ENCODE measurements at regions of chr10 and their contacts with region 1.

Region 1: GRCh38 chr10:3043512-3044368 is 23.6 kb upstream of the PFKP start:
- DNase-seq: peak; percentile 74
- H3K4me3 Mint-ChIP-seq: no peak overlapping the region
- H3K27ac Mint-ChIP-seq: no peak overlapping the region
- H3K4me1 Mint-ChIP-seq: peaks cover 2% of the 10 kb centered on the region
- H3K27me3 Mint-ChIP-seq: peaks cover 2% of the 10 kb centered on the region

Region 2: DNA sequence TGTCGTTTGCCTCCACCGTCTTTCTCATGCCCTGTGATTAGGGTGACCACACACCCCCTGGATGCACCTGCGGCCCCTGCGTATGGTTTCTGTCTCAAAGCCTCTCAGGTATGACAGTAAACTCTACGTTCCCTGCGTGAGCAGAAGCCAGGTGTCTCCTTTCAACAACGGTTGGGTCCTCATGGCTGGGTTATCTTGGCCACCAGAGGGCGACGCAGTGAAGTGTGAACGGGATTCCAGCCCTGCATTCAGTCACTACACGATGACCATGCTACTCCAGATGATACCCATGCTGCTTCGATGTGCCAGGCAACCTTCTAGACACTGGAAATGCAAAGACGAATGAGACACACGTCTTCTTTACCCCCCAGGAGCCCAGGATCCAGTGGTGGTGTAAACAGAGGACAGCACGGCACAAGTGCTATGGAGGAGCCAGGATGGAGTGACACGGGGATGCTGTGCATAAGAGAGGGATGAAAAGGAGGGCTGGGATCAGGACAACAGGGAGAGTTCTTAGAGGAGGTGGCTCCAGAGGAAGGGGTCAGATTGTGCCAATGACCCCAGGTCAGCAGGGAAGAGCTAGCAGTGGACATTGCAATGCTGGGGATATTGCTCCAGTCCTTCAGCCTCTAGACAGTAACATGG is 204.5 kb before region 1 on chr10:
- CTCF ChIA-PET with region 1: interaction called, 4 read pairs
- intact Hi-C with region 1: loop called (anchors 1 kb)
- DNase-seq: peak; percentile 53
- H3K4me3 Mint-ChIP-seq: no peak overlapping the region
- H3K27ac Mint-ChIP-seq: no peak overlapping the region
- H3K4me1 Mint-ChIP-seq: no peaks in the 10 kb centered on the region
- H3K27me3 Mint-ChIP-seq: peaks cover 23% of the 10 kb centered on the region

Region 3: DNA sequence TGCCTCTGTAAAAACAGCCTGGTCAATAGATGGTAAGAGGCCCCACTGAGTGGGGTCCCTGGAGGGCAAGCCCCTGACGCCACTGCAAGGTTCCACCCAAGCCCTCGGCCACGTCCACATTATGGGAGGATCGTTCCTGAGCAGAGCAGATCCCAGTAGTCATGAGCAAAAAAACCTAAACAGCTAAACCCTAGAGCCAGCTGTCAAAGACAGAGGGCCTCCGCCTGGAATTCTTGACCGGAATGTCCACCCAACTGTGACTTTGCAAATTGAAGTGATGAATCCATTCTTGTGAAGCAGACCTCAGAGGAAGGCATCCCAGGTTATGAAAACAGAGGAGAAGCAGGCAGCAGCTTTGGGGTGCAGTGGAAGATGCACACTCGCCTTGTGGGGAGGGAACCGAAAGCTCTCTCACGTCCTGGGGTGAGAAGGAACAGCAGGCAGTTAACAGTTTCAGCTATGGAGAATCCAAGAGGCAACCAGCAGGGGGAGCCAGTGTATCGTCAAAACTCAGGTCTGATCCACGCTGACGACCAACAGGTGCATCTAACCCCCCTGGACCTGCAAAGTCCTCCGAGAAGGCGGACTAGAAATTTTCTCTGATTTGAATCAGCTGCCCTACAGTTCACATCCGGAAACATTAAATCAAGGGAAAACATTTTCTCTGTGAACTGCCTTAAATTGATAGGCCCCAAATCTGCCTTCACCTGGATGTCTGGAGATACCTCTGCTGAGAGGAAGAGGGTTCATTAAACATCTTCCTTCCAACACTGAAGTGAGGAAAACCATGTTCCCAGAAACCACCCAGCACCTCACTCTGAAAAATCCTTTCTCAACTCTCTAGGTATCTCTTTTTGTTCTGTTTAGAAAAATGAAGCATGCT is 115.5 kb before region 1 on chr10:
- CTCF ChIA-PET with region 1: interaction called, 29 read pairs
- intact Hi-C with region 1: loop called (anchors 1 kb)
- DNase-seq: peak; percentile 82
- H3K4me3 Mint-ChIP-seq: no peak overlapping the region
- H3K27ac Mint-ChIP-seq: no peak overlapping the region
- H3K4me1 Mint-ChIP-seq: peaks cover 7% of the 10 kb centered on the region
- H3K27me3 Mint-ChIP-seq: peaks cover 23% of the 10 kb centered on the region

Measured in activated naive CD4-positive, alpha-beta T cell treated with anti-CD3 and anti-CD28 coated beads for 36 hours (primary cell).